Ovary (tissue), 10 donors: ENCODE measurements at regions of chrX and their contacts with region 1.

Region 1: GRCh38 chrX:8358302-8358701 is 106.3 kb upstream of the VCX3B start:
- DNase-seq: no peak
- H3K4me3 ChIP-seq: no peak overlapping the region
- H3K27ac ChIP-seq: no peak overlapping the region
- H3K4me1 ChIP-seq: no peaks in the 10 kb centered on the region
- H3K27me3 ChIP-seq: no peaks in the 10 kb centered on the region
- CTCF ChIP-seq: no peak
- EP300 ChIP-seq: no peak
- POLR2A ChIP-seq: no peak

Region 2: DNA sequence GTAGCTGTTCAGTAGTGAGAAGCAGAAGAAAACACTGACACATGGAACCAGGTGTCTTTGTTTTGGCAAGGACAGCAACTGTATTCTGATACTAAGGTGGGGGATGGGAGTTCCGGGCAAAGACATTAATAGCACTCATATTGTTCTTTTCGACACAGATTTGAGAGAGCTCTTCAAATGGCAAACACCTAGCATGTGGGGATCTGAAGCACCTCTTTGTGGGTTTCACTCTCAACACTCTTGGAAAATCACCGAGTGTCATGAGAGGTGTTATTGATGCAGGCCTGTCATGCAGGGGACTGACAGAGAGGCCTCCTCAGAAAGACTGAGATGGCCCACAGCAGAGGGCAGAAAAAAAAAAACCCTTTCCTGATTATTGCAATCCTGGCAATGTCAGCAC is 743.7 kb before region 1 on chrX:
- intact Hi-C with region 1: no loop called
- DNase-seq: no peak
- H3K4me3 ChIP-seq: no peak overlapping the region
- H3K27ac ChIP-seq: no peak overlapping the region
- H3K4me1 ChIP-seq: no peaks in the 10 kb centered on the region
- H3K27me3 ChIP-seq: no peaks in the 10 kb centered on the region
- CTCF ChIP-seq: no peak
- EP300 ChIP-seq: no peak
- POLR2A ChIP-seq: no peak

Region 3: GRCh38 chrX:9670136-9670814 is 1312.0 kb after region 1 on chrX:
- intact Hi-C with region 1: loop called in 1 of 4 experiments (anchors 5 kb)
- DNase-seq: no peak
- H3K4me3 ChIP-seq: no peak overlapping the region
- H3K27ac ChIP-seq: no peak overlapping the region
- H3K4me1 ChIP-seq: peaks cover 2% of the 10 kb centered on the region
- H3K27me3 ChIP-seq: no peaks in the 10 kb centered on the region
- CTCF ChIP-seq: no peak
- EP300 ChIP-seq: no peak
- POLR2A ChIP-seq: no peak